PC-3 (cell line): ENCODE measurements at regions of chr18 and their contacts with region 1.

Region 1: DNA sequence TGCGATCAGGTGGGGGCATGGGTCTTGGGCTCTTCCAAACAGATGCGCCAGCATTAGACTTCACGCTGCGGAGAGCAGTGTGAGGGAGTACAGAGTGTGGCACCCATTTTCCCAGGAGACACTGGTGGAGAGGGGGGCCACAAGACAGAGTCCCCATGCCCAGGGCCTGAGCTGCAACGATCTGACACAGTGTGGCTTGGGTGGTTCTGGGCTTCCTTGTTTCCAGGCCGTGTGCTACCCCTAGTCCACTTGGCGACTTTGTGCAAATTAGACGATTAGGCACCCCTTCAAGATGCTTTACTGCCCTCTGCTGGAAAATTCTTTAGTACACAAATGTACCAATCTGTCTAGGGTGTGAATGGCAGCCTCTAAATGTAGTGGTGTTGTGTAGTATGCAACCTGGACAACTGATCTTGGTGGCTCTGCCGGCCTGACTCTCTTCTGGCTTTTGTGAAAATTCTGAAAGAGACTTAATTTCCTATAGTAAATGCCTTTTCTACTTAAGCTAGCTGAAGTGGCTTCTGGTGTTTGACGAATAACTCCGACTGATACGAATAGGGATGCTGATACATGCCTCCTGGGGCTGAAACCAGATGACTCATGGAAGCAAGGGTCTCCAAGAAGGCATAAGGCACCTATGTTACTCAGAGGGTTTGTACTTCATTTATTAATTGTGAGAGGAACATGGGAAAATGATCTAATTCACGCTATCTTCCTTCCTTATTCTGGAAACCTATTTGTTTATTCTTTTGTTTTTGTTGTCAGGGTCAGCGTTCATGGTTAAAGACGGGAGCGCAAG is 92.3 kb upstream of the SMAD2 start:
- DNase-seq: peak; percentile 73
- ATAC-seq: peak; percentile 76
- H3K4me3 ChIP-seq: no peak overlapping the region
- H3K27ac ChIP-seq: peak overlapping the region; percentile 73
- H3K4me1 ChIP-seq: peaks cover 10% of the 10 kb centered on the region
- H3K27me3 ChIP-seq: no peaks in the 10 kb centered on the region
- CTCF ChIP-seq: peak; percentile 61

Region 2: DNA sequence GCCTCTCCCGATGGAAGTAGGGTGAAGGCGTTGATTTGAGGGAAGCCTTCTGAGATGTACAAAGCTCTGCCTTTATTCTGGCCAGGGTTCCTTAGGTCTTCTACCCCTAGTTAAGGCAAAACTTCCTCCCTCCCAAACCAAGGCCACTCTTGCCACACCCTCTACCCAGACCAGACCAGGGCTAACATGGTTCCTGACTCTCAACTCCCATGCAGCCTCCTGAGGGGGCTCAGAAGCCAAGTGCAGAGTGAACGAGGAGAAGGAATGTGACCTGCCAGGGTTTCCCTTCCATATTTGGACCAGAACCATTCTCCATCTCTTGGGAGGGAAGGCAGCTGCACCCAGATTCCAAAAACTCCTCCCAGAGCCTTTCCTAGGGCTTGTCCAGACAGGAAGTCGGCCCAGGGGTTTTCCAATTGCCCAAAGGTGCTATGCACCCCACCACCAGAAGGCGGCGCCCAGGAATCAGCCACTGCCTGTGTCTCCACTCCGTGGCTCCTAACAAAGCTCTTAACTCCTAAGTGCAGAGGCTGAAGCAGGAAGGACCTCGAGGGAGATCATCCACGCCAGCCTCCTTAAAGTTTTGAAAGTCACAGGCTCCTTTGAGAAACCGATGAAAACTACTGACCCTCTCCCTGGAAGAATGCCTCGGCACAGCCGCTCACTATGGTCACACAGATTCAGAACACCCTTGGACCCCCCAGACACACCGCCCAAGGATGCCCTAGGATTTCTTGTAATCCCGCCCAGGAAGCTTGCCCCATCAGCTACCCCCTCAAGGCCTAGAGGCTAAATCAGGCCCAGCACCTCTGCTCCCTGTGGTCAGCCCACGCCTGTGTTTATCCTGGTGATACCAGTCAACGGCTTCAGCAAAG is 250.1 kb before region 1 on chr18:
- CTCF ChIA-PET with region 1: no interaction called
- POLR2A ChIA-PET with region 1: no interaction called
- intact Hi-C with region 1: loop called (anchors 1 kb)
- DNase-seq: peak; percentile 57
- ATAC-seq: peak; percentile 86
- H3K4me3 ChIP-seq: no peak overlapping the region
- H3K27ac ChIP-seq: no peak overlapping the region
- H3K4me1 ChIP-seq: no peaks in the 10 kb centered on the region
- H3K27me3 ChIP-seq: no peaks in the 10 kb centered on the region
- CTCF ChIP-seq: peak; percentile 60

Region 3: GRCh38 chr18:47865183-47865582 is 157.5 kb before region 1 on chr18:
- CTCF ChIA-PET with region 1: no interaction called
- POLR2A ChIA-PET with region 1: no interaction called
- intact Hi-C with region 1: loop called (anchors 1 kb)
- DNase-seq: peak; percentile 43
- ATAC-seq: peak; percentile 69
- H3K4me3 ChIP-seq: no peak overlapping the region
- H3K27ac ChIP-seq: peak overlapping the region; percentile 37
- H3K4me1 ChIP-seq: 0 out of 2 replicates have a peak, but pooled peaks cover 6% of the 10 kb centered on the region
- H3K27me3 ChIP-seq: no peaks in the 10 kb centered on the region
- CTCF ChIP-seq: no peak

Region 4: DNA sequence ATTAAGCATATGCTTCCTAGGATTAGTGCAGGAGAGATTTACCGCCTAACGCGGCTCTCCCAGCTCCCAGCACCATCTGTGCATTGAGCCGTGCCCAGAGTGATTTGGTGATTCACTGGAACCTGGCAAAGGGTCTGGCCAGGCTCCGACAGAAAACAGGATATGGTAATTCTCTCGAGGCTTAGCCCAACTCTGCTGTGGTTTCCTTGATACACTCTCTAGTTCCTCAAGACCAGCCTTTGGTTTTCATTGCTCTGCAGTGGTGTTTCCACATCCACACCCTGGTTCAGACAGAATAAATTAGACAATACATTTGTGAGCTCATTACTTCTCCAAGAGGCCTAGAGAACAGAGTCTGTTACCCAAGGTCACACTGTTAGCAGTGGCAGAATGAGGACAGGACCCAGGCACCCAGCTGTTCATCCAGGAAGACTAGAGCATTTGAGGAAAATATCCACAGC is 69.2 kb before region 1 on chr18:
- CTCF ChIA-PET with region 1: no interaction called
- POLR2A ChIA-PET with region 1: no interaction called
- intact Hi-C with region 1: no loop called
- DNase-seq: peak; percentile 11
- ATAC-seq: peak; percentile 66; the same call in 1 of the 2 replicates
- H3K4me3 ChIP-seq: no peak overlapping the region
- H3K27ac ChIP-seq: no peak overlapping the region
- H3K4me1 ChIP-seq: no peaks in the 10 kb centered on the region; the same call in 1 of the 2 replicates
- H3K27me3 ChIP-seq: no peaks in the 10 kb centered on the region
- CTCF ChIP-seq: no peak